ENCODE measurements at regions of chr1 and their contacts with region 1.

Region 1: GRCh38 chr1:61184040-61184713 is 101.8 kb downstream of the NFIA start:
- DNase-seq: peak; percentile 89 to 98 (median 92)

Region 2: DNA sequence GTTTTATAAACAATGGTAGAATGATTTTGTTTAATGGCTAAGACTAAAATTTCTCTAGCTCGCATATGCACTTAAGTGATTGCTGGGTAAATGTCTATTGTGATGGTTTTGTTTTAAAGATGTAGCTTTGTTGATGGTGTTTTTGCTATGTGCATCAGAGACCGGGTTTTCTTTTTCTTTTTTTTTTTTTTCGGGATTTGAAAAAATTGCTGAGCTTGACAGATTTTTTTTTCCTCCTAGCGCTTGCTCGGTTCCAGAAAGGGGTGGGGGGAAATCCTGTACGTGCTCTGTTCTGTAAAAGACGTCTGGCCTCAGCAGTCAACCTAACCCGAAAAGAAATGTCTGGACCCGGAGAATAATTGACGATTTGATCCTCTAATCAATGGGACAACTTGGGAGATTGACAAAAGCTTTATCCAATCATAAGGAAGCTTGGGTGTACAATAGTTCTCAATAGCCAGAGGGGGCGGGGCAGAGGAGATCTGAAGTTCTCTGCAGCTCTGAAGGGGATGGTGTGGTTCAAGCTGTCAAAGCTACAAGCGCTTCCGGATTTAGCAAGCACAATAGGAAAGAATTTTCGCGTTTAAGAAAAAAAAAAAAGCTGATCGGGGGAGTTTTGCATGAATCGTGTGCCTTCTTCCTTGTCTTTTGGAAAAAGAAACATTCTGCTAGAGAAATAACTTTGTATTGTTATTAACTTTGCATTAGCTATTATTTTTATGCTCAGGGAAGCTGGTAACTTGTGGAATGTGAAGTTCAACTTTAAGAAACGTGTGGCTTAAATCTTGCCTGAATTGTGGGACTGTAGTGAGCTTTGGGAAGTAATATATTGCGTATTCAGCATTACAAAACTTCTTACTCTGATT is 106.3 kb before region 1 on chr1:
- intact Hi-C with region 1: loop called (anchors 5 kb)
- DNase-seq: peak; percentile 57 to 96 (median 78)

Region 3: DNA sequence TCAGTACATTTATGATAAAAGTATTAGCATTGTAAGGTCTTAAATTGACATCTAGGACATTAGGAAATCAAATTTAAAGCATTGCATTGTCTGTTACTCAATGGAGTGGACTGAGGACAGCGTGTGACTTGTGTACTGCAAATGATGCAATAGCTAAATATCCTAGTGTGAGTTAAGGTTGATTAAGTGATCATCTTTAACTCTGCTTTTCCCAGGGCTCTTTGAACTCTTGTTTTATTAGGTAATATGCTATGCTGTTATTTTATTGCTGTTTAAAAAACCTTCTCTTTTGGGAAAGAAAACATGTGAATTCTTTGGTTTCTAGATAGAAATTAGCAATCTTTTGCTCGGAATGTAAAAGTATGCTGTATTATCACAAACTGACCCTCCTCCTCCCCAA is 63.2 kb before region 1 on chr1:
- intact Hi-C with region 1: loop called (anchors 5 kb)
- DNase-seq: no peak

Region 4: DNA sequence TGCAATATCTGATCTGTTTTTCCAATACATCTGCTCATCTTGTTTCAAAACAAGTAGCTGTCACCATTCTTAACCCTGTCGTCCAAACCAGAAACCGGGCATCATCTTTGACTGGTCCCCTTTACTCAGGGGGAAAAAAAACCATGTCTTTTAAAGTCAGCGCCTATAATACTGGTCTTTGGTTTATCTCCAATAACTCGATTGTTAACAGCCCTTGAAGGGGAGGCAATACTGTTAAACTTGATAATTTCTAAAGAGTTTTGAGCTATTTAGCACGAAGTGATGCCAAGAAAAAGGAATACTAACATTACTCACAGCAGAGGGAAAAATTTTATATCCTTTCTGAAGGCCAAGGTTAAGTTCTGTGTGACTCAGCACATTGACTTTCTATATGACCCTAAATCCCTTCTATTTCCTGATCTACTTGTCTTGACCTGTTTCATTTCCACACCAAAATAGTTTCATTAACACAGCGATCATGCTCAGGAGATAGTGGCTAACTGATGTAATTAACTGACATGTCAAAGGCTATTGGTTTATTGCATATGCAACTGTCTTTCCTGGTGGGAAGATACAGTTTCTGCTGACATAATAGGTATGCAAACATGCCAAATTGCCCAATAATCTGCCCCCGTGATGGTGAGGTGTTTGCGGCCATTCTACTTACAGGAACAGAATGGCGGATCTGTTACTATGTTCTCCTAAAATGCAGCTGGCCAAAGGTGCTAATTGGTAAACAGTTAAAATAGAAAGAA is 42.7 kb before region 1 on chr1:
- intact Hi-C with region 1: loop called (anchors 5 kb)
- DNase-seq: no peak

Region 5: GRCh38 chr1:61368876-61369275 is 184.7 kb after region 1 on chr1:
- intact Hi-C with region 1: no loop called
- DNase-seq: no peak